ENCODE measurements at regions of chr3 and their contacts with region 1.

Region 1: DNA sequence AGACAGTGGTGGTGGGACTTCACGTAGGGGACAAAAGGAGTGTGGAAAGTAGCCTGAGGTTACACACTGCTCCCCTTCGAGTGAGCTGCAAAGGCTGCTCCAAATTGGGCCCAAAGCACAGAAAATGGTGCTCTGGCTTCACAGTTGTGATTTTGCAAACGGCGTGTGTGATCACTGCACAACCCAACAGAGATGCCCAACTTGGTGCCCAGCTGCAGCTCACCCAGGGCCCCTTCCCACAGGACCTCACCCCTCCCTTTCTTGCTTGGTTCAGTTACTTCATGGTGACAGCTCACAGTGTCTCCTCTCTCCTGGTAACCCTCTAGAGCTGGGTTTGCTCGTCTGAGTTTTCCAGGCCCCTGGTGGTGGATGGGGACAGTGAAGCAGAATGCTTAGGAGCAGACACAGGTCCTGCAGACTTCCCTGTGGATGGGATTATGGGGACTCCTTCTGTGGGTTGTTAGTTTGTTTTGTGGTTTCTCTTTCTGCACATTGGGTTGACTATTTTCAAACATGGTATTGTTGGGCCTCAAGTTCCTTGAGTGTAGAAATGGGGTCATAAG is 98.3 kb downstream of the TOP2B start:
- DNase-seq: no peak
- H3K4me3 ChIP-seq: no peak overlapping the region
- CTCF ChIP-seq: no peak
- POLR2A ChIP-seq: no peak

Region 2: GRCh38 chr3:25427942-25428788 is 138.3 kb before region 1 on chr3 and contains the start of gene RARB:
- intact Hi-C with region 1: loop called (anchors 10 kb)
- DNase-seq: peak; percentile 56 to 89
- H3K4me3 ChIP-seq: peak within 1 kb of the TSS; percentile 15
- CTCF ChIP-seq: no peak
- POLR2A ChIP-seq: no peak
- total RNA-seq, gene RARB: 0.34 to 6.5 (median 4.4) TPM in 3 of 4 donors, not detected in the other

Region 3: DNA sequence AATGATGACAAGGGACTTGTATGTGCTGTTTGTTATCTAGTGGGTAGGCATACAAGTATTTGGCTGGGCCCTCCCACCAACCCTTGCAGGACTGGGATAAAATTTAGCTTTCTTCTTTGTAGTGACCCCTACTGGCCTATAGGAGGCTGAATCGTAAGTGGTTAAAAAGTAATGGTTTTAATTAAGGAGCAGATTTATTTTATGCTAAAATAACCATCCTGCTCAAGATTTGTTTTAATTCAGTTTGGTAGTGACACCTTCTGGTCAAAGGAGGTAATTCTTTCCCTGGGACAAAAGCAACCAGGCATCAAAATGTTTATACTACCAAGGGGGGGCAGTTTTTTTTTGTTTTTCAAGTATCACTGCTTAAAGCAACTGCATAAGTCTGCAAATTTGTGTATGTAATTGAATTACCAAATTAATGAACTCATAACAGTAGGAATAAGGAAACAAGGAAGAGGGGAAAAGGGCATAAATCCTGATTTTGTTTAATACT is 27.6 kb after region 1 on chr3:
- intact Hi-C with region 1: no loop called
- DNase-seq: no peak
- H3K4me3 ChIP-seq: no peak overlapping the region
- CTCF ChIP-seq: peak in 1 of 3 donors; percentile 79
- POLR2A ChIP-seq: no peak

Region 4: GRCh38 chr3:26202169-26202568 is 635.7 kb after region 1 on chr3:
- intact Hi-C with region 1: no loop called
- DNase-seq: no peak
- H3K4me3 ChIP-seq: no peak overlapping the region
- CTCF ChIP-seq: no peak
- POLR2A ChIP-seq: no peak

Measured in lower leg skin (tissue), 4 donors.